ENCODE measurements at regions of chr2 and their contacts with region 1.

Region 1: DNA sequence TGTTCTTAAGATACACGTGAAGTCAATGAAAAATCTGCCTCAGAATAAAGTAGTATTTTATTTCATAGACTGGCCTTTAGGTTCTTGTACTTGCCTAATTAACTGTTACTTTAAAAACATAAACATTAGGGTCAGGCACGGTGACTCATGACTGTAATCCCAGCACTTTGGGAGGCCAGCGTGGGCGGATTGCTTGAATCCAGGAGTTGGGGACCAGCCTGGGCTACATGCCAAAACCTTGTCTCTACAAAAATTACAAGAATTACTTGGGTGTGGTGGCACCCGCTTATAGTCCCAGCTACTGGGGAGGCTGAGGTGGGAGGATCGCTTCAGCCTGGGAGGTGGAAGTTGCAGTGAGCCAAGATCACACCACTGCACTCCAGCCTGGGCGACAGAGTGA is 16.0 kb upstream of the SNORC start:
- DNase-seq: no peak
- ATAC-seq: no peak
- H3K4me3 ChIP-seq: no peak overlapping the region
- H3K4me3 Mint-ChIP-seq: no peak overlapping the region
- H3K27ac ChIP-seq: no peak overlapping the region
- H3K27ac Mint-ChIP-seq: no peak overlapping the region
- H3K4me1 ChIP-seq: no peaks in the 10 kb centered on the region
- H3K4me1 Mint-ChIP-seq: peaks cover 0 to 5% (median 0%) of the 10 kb centered on the region in 7 donors
- H3K27me3 ChIP-seq: no peaks in the 10 kb centered on the region
- H3K27me3 Mint-ChIP-seq: no peaks in the 10 kb centered on the region

Region 2: GRCh38 chr2:232781765-232782164 is 72.3 kb before region 1 on chr2:
- CTCF ChIA-PET with region 1: no interaction called
- POLR2A ChIA-PET with region 1: no interaction called
- intact Hi-C with region 1: loop called in 1 of 2 experiments (anchors 2 kb)
- DNase-seq: peak in 1 of 9 donors; percentile 28
- ATAC-seq: peak; percentile 48
- H3K4me3 ChIP-seq: no peak overlapping the region
- H3K4me3 Mint-ChIP-seq: peak overlapping the region in 1 of 10 donors; percentile 47
- H3K27ac ChIP-seq: no peak overlapping the region
- H3K27ac Mint-ChIP-seq: peak overlapping the region in 2 of 9 donors; percentile 3 to 79
- H3K4me1 ChIP-seq: no peaks in the 10 kb centered on the region
- H3K4me1 Mint-ChIP-seq: peaks cover 0 to 16% (median 0%) of the 10 kb centered on the region in 7 donors
- H3K27me3 ChIP-seq: no peaks in the 10 kb centered on the region
- H3K27me3 Mint-ChIP-seq: no peaks in the 10 kb centered on the region

Region 3: DNA sequence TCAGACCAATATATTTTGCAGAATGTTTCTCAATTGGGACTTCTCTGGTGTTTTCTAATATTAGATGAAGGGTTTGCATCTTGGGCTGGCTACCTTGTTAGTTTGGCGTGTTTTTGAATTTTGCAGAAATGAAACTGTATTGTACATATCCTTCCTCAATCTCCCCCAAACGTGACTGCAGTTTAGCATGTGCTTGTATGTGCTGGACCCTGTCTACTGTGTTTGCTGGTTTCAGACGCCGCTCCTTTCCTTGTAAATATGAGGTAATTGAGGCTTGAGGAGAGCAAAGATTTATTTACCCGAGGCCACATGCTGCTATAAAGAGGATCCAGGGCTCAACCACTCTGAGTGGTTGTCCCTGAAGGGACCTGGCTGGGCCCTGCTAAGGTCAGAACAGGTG is 101.8 kb after region 1 on chr2:
- CTCF ChIA-PET with region 1: no interaction called
- POLR2A ChIA-PET with region 1: no interaction called
- intact Hi-C with region 1: no loop called
- DNase-seq: no peak
- ATAC-seq: peak; percentile 47
- H3K4me3 ChIP-seq: no peak overlapping the region
- H3K4me3 Mint-ChIP-seq: no peak overlapping the region
- H3K27ac ChIP-seq: no peak overlapping the region
- H3K27ac Mint-ChIP-seq: no peak overlapping the region
- H3K4me1 ChIP-seq: no peaks in the 10 kb centered on the region
- H3K4me1 Mint-ChIP-seq: no peaks in the 10 kb centered on the region
- H3K27me3 ChIP-seq: no peaks in the 10 kb centered on the region
- H3K27me3 Mint-ChIP-seq: peaks cover 0 to 10% (median 5%) of the 10 kb centered on the region in 5 donors